ENCODE measurements at regions of chr5 and their contacts with region 1.

Region 1: DNA sequence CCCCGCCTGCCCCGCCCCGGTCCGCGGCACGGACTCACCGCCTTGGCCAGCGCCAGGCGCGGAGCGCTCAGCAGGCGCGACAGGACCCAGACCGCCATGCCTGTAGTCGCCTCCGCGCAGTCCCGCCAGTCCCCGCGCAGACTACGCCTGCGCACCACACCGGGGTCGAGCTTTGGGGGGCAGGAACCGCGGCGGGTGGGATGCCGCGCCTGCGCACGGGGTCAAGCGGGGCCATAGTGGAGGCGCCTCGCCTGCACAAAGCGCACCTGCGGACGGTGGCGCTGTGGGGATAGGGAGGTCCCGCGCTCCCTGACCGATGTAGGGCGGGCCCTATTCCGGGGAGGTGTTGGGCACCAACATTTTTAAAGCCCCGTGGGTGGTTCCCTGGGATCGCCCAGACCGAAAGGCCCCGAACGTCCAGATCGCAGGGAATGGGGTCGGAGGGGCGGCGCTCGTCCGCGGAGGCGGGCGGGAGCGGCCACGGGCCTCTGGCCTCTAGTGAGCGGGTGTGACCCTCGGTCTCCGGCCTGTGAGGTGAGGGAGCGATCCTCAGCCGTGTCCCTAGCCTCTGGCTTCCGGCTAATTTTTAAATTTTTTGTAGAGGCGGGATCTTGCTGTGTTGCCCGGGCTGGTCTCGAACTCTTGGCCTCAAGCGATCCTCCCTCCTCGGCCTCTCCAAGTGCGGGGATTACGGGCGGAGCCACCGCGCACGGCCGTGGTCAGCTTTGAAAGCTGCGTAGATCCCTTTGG is 70.8 kb upstream of the LPCAT1 start:
- DNase-seq: peak; percentile 10 to 75 (median 64)
- ATAC-seq: peak; percentile 91
- H3K4me3 ChIP-seq: peak overlapping the region; percentile 71
- H3K4me3 Mint-ChIP-seq: peak overlapping the region; percentile 53 to 86 (median 78)
- H3K27ac ChIP-seq: peak overlapping the region; percentile 58
- H3K27ac Mint-ChIP-seq: peak overlapping the region in 3 of 9 donors; percentile 54 to 81 (median 77)
- H3K4me1 ChIP-seq: no peaks in the 10 kb centered on the region
- H3K4me1 Mint-ChIP-seq: peaks cover 0 to 16% (median 8%) of the 10 kb centered on the region in 7 donors
- H3K27me3 ChIP-seq: no peaks in the 10 kb centered on the region
- H3K27me3 Mint-ChIP-seq: peaks cover 0 to 3% (median 0%) of the 10 kb centered on the region in 5 donors

Region 2: GRCh38 chr5:1536322-1536845 is 58.1 kb before region 1 on chr5:
- CTCF ChIA-PET with region 1: no interaction called
- POLR2A ChIA-PET with region 1: interaction called, 5 read pairs
- intact Hi-C with region 1: loop called in 1 of 2 experiments (anchors 1 kb)
- DNase-seq: peak; percentile 25 to 72 (median 61)
- ATAC-seq: peak; percentile 97
- H3K4me3 ChIP-seq: peak overlapping the region; percentile 59
- H3K4me3 Mint-ChIP-seq: peak overlapping the region; percentile 71 to 90 (median 82)
- H3K27ac ChIP-seq: peak overlapping the region; percentile 75
- H3K27ac Mint-ChIP-seq: peak overlapping the region; percentile 81 to 94 (median 91)
- H3K4me1 ChIP-seq: peaks cover 11 to 22% of the 10 kb centered on the region in 2 donors
- H3K4me1 Mint-ChIP-seq: peaks cover 19 to 37% (median 30%) of the 10 kb centered on the region in 7 donors
- H3K27me3 ChIP-seq: no peaks in the 10 kb centered on the region
- H3K27me3 Mint-ChIP-seq: peaks cover 0 to 39% (median 0%) of the 10 kb centered on the region in 5 donors